A549 (cell line): ENCODE measurements at regions of chr9 and their contacts with region 1.

Region 1: DNA sequence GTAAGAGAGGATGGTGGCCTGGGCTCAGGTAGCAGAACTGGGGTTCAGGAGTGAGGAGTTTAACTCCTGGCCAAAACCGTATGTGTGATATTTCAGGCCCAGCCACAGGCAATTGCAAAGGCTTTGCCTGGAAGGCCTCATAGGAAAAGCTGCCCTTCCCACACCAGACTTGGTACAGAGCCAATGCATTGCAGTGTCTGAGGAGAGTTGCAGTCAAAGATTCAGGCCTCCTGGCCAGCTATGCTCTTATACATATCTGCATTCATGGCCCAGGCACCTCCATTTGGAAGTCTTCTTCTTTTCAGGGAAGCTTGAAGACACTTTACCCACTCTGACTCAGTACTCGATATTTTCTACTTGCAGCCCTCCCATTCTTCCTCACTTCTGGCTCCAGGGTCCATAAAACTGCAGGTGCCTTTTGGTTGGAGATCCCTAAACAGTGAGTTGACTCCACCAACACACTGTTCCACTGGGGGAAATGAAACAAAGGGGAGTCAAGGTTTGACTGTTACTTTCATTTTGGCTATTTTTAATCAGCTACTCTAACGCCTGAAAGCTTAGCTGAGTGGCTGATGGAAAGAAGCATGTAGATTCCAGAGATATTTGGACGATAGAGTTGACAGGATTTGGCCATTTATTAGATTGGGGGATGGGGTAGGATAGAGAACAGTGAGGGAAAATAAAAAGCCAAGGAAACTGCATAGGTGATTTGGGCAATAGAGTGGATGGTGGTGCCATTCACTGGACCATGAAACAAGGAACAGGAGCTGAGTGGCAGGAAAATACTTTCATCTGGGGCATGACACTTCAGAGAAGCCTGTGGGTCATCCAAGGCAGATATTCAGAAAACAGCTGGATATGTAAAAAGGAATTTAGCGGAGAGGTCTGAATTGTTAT is 30.6 kb upstream of the IL33 start:
- DNase-seq: no peak
- ATAC-seq: no peak
- H3K4me3 ChIP-seq: no peak overlapping the region
- H3K27ac ChIP-seq: no peak overlapping the region
- H3K4me1 ChIP-seq: 0 out of 3 replicates have a peak, but pooled peaks cover 3% of the 10 kb centered on the region
- CTCF ChIP-seq: no peak
- EP300 ChIP-seq: no peak
- POLR2A ChIP-seq: no peak
- RAD21 ChIP-seq: no peak

Region 2: GRCh38 chr9:6197330-6197729 is 12.3 kb after region 1 on chr9:
- CTCF ChIA-PET with region 1: interaction called, 15 read pairs
- POLR2A ChIA-PET with region 1: no interaction called
- DNase-seq: no peak
- ATAC-seq: peak in 1 of 2 experiments; percentile 39; a peak in 2 of 6 replicates
- H3K4me3 ChIP-seq: no peak overlapping the region
- H3K27ac ChIP-seq: no peak overlapping the region
- H3K4me1 ChIP-seq: no peaks in the 10 kb centered on the region
- CTCF ChIP-seq: no peak
- EP300 ChIP-seq: no peak
- POLR2A ChIP-seq: no peak
- RAD21 ChIP-seq: peak in 1 of 2 experiments; percentile 37; a peak in 2 of 5 replicates